ENCODE measurements at regions of chr1 and their contacts with region 1.

Region 1: GRCh38 chr1:186680245-186681061 is at the start of gene PTGS2:
- DNase-seq: peak; percentile 96
- H3K4me3 Mint-ChIP-seq: peak within 1 kb of the TSS; percentile 82
- H3K27ac Mint-ChIP-seq: peak within 1 kb of the TSS; percentile 82
- H3K4me1 Mint-ChIP-seq: peaks cover 25% of the 10 kb centered on the region
- H3K27me3 Mint-ChIP-seq: no peaks in the 10 kb centered on the region
- CTCF ChIP-seq: peak; percentile 70
- total RNA-seq, gene PTGS2: 64.2 and 78.2 TPM in 2 replicates

Region 2: GRCh38 chr1:186404454-186405051 is 275.9 kb before region 1 on chr1:
- CTCF ChIA-PET with region 1: no interaction called
- intact Hi-C with region 1: loop called (anchors 5 kb)
- DNase-seq: peak; percentile 13
- H3K4me3 Mint-ChIP-seq: no peak overlapping the region
- H3K27ac Mint-ChIP-seq: no peak overlapping the region
- H3K4me1 Mint-ChIP-seq: no peaks in the 10 kb centered on the region
- H3K27me3 Mint-ChIP-seq: no peaks in the 10 kb centered on the region
- CTCF ChIP-seq: peak; percentile 59

Region 3: GRCh38 chr1:186605762-186606350 is 74.6 kb before region 1 on chr1:
- CTCF ChIA-PET with region 1: interaction called, 28 read pairs
- intact Hi-C with region 1: loop called (anchors 1 kb)
- DNase-seq: peak; percentile 76
- H3K4me3 Mint-ChIP-seq: no peak overlapping the region
- H3K27ac Mint-ChIP-seq: peak overlapping the region; percentile 51
- H3K4me1 Mint-ChIP-seq: peaks cover 26% of the 10 kb centered on the region
- H3K27me3 Mint-ChIP-seq: no peaks in the 10 kb centered on the region
- CTCF ChIP-seq: peak; percentile 89

Region 4: GRCh38 chr1:186643600-186643999 is 36.9 kb before region 1 on chr1:
- CTCF ChIA-PET with region 1: no interaction called
- intact Hi-C with region 1: loop called (anchors 5 kb)
- DNase-seq: no peak
- H3K4me3 Mint-ChIP-seq: no peak overlapping the region
- H3K27ac Mint-ChIP-seq: peak overlapping the region; percentile 22
- H3K4me1 Mint-ChIP-seq: peaks cover 27% of the 10 kb centered on the region
- H3K27me3 Mint-ChIP-seq: no peaks in the 10 kb centered on the region
- CTCF ChIP-seq: no peak

Region 5: DNA sequence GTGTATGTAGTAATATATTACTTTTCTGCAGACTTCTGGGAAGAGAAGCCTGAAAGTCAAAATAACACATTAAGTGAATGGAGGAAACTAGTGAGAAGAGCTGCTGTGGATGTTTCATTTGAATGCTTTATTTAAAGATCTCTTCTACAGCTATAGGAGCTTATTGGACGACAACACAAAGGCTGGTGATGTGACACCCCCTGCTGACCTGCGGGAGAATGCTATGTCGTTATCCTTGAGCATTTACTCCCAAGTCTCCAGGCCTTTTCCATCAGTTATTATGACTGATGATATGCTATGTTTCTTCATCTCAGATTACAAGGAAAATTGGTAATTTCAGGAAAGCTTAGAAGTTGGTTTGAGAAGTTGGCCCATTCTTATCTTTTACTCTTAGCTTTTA is 126.0 kb after region 1 on chr1:
- CTCF ChIA-PET with region 1: interaction called, 19 read pairs
- intact Hi-C with region 1: loop called (anchors 1 kb)
- DNase-seq: peak; percentile 70
- H3K4me3 Mint-ChIP-seq: no peak overlapping the region
- H3K27ac Mint-ChIP-seq: no peak overlapping the region
- H3K4me1 Mint-ChIP-seq: peaks cover 9% of the 10 kb centered on the region
- H3K27me3 Mint-ChIP-seq: no peaks in the 10 kb centered on the region
- CTCF ChIP-seq: peak; percentile 63

Region 6: GRCh38 chr1:186985889-186986491 is 305.5 kb after region 1 on chr1:
- CTCF ChIA-PET with region 1: interaction called, 3 read pairs
- intact Hi-C with region 1: loop called (anchors 2 kb)
- DNase-seq: peak; percentile 35
- H3K4me3 Mint-ChIP-seq: no peak overlapping the region
- H3K27ac Mint-ChIP-seq: peak overlapping the region; percentile 37
- H3K4me1 Mint-ChIP-seq: peaks cover 19% of the 10 kb centered on the region
- H3K27me3 Mint-ChIP-seq: no peaks in the 10 kb centered on the region
- CTCF ChIP-seq: peak; percentile 60

Measured in Calu3 (cell line).